ENCODE measurements at regions of chr6 and their contacts with region 1.

Region 1: GRCh38 chr6:157379656-157380454 is 1.1 kb upstream of the ZDHHC14 start:
- DNase-seq: peak; percentile 63 to 89 (median 84)
- ATAC-seq: peak; percentile 85
- H3K4me3 ChIP-seq: peak overlapping the region; percentile 71
- H3K4me3 Mint-ChIP-seq: peak overlapping the region; percentile 80 to 93 (median 84)
- H3K27ac ChIP-seq: peak overlapping the region; percentile 80
- H3K27ac Mint-ChIP-seq: peak overlapping the region; percentile 2 to 89 (median 78)
- H3K4me1 ChIP-seq: peaks cover 4 to 5% of the 10 kb centered on the region in 2 donors
- H3K4me1 Mint-ChIP-seq: peaks cover 7 to 35% (median 18%) of the 10 kb centered on the region in 7 donors
- H3K27me3 ChIP-seq: no peaks in the 10 kb centered on the region
- H3K27me3 Mint-ChIP-seq: peaks cover 0 to 14% (median 4%) of the 10 kb centered on the region in 5 donors

Region 2: DNA sequence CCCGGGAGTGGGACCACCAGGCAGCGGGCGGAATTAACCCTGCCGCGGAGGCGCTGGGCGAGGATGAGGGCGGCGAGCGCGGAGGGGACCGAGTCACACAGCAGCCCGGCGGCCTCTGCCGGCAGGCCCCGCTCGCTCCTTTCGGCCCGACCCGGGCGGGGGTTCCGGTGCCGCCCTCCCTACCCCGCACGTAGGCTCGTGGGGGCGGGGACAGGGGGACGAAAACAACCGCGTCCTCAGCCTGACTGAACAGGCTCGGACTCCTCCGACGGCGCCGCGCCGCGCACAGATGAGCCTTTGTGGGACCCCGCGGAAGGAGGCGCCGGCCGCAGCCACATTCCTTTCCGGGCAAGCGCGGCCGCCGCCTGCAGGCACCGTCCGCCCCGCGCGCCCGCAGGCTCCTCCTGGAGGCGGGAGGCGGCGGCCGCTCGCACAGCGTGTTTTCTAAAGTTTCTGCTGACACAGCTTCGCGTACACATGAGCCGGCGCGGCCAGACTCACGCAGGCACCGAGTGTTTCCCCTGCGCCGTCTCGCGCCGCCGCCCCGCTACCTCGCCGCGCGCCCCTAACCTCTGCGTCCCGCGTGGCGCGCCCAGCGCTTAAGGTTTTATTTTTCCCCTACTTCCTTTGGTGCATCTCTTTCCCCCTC is 358.4 kb before region 1 on chr6:
- CTCF ChIA-PET with region 1: no interaction called
- POLR2A ChIA-PET with region 1: no interaction called
- intact Hi-C with region 1: loop called (anchors 1 kb)
- DNase-seq: peak; percentile 85 to 93 (median 91)
- ATAC-seq: peak; percentile 90
- H3K4me3 ChIP-seq: peak overlapping the region; percentile 79
- H3K4me3 Mint-ChIP-seq: peak overlapping the region; percentile 76 to 98 (median 95)
- H3K27ac ChIP-seq: peak overlapping the region; percentile 100
- H3K27ac Mint-ChIP-seq: peak overlapping the region; percentile 86 to 100 (median 99)
- H3K4me1 ChIP-seq: peaks cover 5 to 21% of the 10 kb centered on the region in 2 donors
- H3K4me1 Mint-ChIP-seq: peaks cover 32 to 82% (median 64%) of the 10 kb centered on the region in 7 donors
- H3K27me3 ChIP-seq: no peaks in the 10 kb centered on the region
- H3K27me3 Mint-ChIP-seq: no peaks in the 10 kb centered on the region

Region 3: GRCh38 chr6:157323255-157323965 is 56.4 kb before region 1 on chr6 and contains the start of gene TMEM242:
- CTCF ChIA-PET with region 1: interaction called, 3 read pairs
- POLR2A ChIA-PET with region 1: interaction called, 7 read pairs
- intact Hi-C with region 1: loop called (anchors 1 kb)
- DNase-seq: peak; percentile 68 to 93 (median 81)
- ATAC-seq: peak; percentile 98
- H3K4me3 ChIP-seq: peak within 1 kb of the TSS; percentile 95
- H3K4me3 Mint-ChIP-seq: peak within 1 kb of the TSS; percentile 93 to 99 (median 95)
- H3K27ac ChIP-seq: peak within 1 kb of the TSS; percentile 76
- H3K27ac Mint-ChIP-seq: peak within 1 kb of the TSS; percentile 78 to 93 (median 92)
- H3K4me1 ChIP-seq: peaks cover 8 to 12% of the 10 kb centered on the region in 2 donors
- H3K4me1 Mint-ChIP-seq: peaks cover 10 to 47% (median 24%) of the 10 kb centered on the region in 7 donors
- H3K27me3 ChIP-seq: no peaks in the 10 kb centered on the region
- H3K27me3 Mint-ChIP-seq: peaks cover 0 to 30% (median 10%) of the 10 kb centered on the region in 5 donors
- total RNA-seq, gene TMEM242: 11.6 to 15.6 (median 13.2) TPM

Region 4: GRCh38 chr6:157333537-157333936 is 46.3 kb before region 1 on chr6:
- CTCF ChIA-PET with region 1: no interaction called
- POLR2A ChIA-PET with region 1: no interaction called
- intact Hi-C with region 1: no loop called
- DNase-seq: no peak
- ATAC-seq: no peak
- H3K4me3 ChIP-seq: no peak overlapping the region
- H3K4me3 Mint-ChIP-seq: no peak overlapping the region
- H3K27ac ChIP-seq: no peak overlapping the region
- H3K27ac Mint-ChIP-seq: no peak overlapping the region
- H3K4me1 ChIP-seq: no peaks in the 10 kb centered on the region
- H3K4me1 Mint-ChIP-seq: peaks cover 0 to 2% (median 0%) of the 10 kb centered on the region in 7 donors
- H3K27me3 ChIP-seq: no peaks in the 10 kb centered on the region
- H3K27me3 Mint-ChIP-seq: peaks cover 32 to 68% (median 40%) of the 10 kb centered on the region in 5 donors

Region 5: GRCh38 chr6:157569543-157569942 is 189.7 kb after region 1 on chr6:
- CTCF ChIA-PET with region 1: no interaction called
- POLR2A ChIA-PET with region 1: no interaction called
- intact Hi-C with region 1: loop called in 1 of 2 experiments (anchors 5 kb)
- DNase-seq: peak in 7 of 9 donors; percentile 30 to 78 (median 68)
- ATAC-seq: peak; percentile 90
- H3K4me3 ChIP-seq: no peak overlapping the region
- H3K4me3 Mint-ChIP-seq: peak overlapping the region in 8 of 10 donors; percentile 37 to 83 (median 67)
- H3K27ac ChIP-seq: no peak overlapping the region
- H3K27ac Mint-ChIP-seq: peak overlapping the region in 4 of 9 donors; percentile 21 to 76 (median 40)
- H3K4me1 ChIP-seq: peaks cover 11 to 13% of the 10 kb centered on the region in 2 donors
- H3K4me1 Mint-ChIP-seq: peaks cover 5 to 42% (median 27%) of the 10 kb centered on the region in 7 donors
- H3K27me3 ChIP-seq: no peaks in the 10 kb centered on the region
- H3K27me3 Mint-ChIP-seq: peaks cover 0 to 7% (median 0%) of the 10 kb centered on the region in 5 donors

Region 6: GRCh38 chr6:157823001-157823527 is 443.2 kb after region 1 on chr6 and contains the start of gene SNX9:
- CTCF ChIA-PET with region 1: no interaction called
- POLR2A ChIA-PET with region 1: no interaction called
- intact Hi-C with region 1: loop called in 1 of 2 experiments (anchors 5 kb)
- DNase-seq: peak in 8 of 9 donors; percentile 27 to 74 (median 56)
- ATAC-seq: peak; percentile 77
- H3K4me3 ChIP-seq: peak within 1 kb of the TSS; percentile 60
- H3K4me3 Mint-ChIP-seq: peak within 1 kb of the TSS; percentile 88 to 100 (median 96)
- H3K27ac ChIP-seq: peak within 1 kb of the TSS; percentile 96
- H3K27ac Mint-ChIP-seq: peak within 1 kb of the TSS; percentile 95 to 100 (median 99)
- H3K4me1 ChIP-seq: peaks cover 9 to 16% of the 10 kb centered on the region in 2 donors
- H3K4me1 Mint-ChIP-seq: peaks cover 15 to 70% (median 57%) of the 10 kb centered on the region in 7 donors
- H3K27me3 ChIP-seq: no peaks in the 10 kb centered on the region
- H3K27me3 Mint-ChIP-seq: peaks cover 0 to 42% (median 0%) of the 10 kb centered on the region in 5 donors
- total RNA-seq, gene SNX9: 13.4 to 39.2 (median 36.4) TPM

Region 7: GRCh38 chr6:158168040-158168289 is 788.1 kb after region 1 on chr6 and contains the start of gene SERAC1:
- CTCF ChIA-PET with region 1: no interaction called
- POLR2A ChIA-PET with region 1: no interaction called
- intact Hi-C with region 1: loop called in 1 of 2 experiments (anchors 2 kb)
- DNase-seq: no peak
- ATAC-seq: peak; percentile 59
- H3K4me3 ChIP-seq: peak within 1 kb of the TSS; percentile 88
- H3K4me3 Mint-ChIP-seq: peak within 1 kb of the TSS; percentile 81 to 96 (median 96)
- H3K27ac ChIP-seq: peak within 1 kb of the TSS; percentile 96
- H3K27ac Mint-ChIP-seq: peak within 1 kb of the TSS; percentile 90 to 99 (median 98)
- H3K4me1 ChIP-seq: peaks cover 0 to 5% of the 10 kb centered on the region in 2 donors
- H3K4me1 Mint-ChIP-seq: peaks cover 14 to 46% (median 27%) of the 10 kb centered on the region in 7 donors
- H3K27me3 ChIP-seq: no peaks in the 10 kb centered on the region
- H3K27me3 Mint-ChIP-seq: no peaks in the 10 kb centered on the region
- total RNA-seq, gene SERAC1: 2.4 to 5.4 (median 4.6) TPM

Region 8: GRCh38 chr6:158506577-158506976 is 1126.7 kb after region 1 on chr6:
- CTCF ChIA-PET with region 1: no interaction called
- POLR2A ChIA-PET with region 1: no interaction called
- intact Hi-C with region 1: no loop called
- DNase-seq: no peak
- ATAC-seq: no peak
- H3K4me3 ChIP-seq: no peak overlapping the region
- H3K4me3 Mint-ChIP-seq: no peak overlapping the region
- H3K27ac ChIP-seq: no peak overlapping the region
- H3K27ac Mint-ChIP-seq: no peak overlapping the region
- H3K4me1 ChIP-seq: no peaks in the 10 kb centered on the region
- H3K4me1 Mint-ChIP-seq: no peaks in the 10 kb centered on the region
- H3K27me3 ChIP-seq: no peaks in the 10 kb centered on the region
- H3K27me3 Mint-ChIP-seq: no peaks in the 10 kb centered on the region